PC-9 (cell line): ENCODE measurements at regions of chr7 and their contacts with region 1.

Region 1: DNA sequence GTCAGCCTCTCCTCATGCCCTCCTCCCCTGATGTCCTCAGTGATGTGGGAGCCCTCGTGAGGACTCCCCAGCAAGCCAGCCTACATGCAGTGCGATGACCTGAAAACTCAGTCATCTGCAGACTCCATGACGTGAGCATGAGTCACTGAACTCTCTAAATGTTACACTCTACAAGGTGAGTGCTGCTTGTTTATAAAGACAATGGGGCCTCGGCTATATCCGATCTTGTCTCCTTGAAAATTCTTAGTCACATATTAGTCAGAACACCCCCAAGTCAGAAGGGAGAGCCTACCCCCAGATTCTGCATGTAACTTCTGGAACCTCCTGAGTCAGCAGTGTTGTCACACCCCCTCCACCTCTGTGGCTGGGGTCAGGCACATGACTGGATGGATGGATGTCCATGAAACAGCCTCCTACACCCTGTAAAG is 673.8 kb downstream of the INHBA start:
- DNase-seq: peak; percentile 74 to 84
- H3K4me3 ChIP-seq: no peak overlapping the region
- H3K27ac ChIP-seq: peak overlapping the region; percentile 39
- H3K4me1 ChIP-seq: peaks cover 22% of the 10 kb centered on the region
- H3K27me3 ChIP-seq: no peaks in the 10 kb centered on the region
- CTCF ChIP-seq: no peak

Region 2: GRCh38 chr7:40733578-40733977 is 295.5 kb before region 1 on chr7:
- CTCF ChIA-PET with region 1: no interaction called
- POLR2A ChIA-PET with region 1: no interaction called
- intact Hi-C with region 1: loop called (anchors 1 kb)
- DNase-seq: peak; percentile 40 to 92
- H3K4me3 ChIP-seq: no peak overlapping the region
- H3K27ac ChIP-seq: peak overlapping the region; percentile 36
- H3K4me1 ChIP-seq: peaks cover 26% of the 10 kb centered on the region
- H3K27me3 ChIP-seq: no peaks in the 10 kb centered on the region
- CTCF ChIP-seq: no peak

Region 3: DNA sequence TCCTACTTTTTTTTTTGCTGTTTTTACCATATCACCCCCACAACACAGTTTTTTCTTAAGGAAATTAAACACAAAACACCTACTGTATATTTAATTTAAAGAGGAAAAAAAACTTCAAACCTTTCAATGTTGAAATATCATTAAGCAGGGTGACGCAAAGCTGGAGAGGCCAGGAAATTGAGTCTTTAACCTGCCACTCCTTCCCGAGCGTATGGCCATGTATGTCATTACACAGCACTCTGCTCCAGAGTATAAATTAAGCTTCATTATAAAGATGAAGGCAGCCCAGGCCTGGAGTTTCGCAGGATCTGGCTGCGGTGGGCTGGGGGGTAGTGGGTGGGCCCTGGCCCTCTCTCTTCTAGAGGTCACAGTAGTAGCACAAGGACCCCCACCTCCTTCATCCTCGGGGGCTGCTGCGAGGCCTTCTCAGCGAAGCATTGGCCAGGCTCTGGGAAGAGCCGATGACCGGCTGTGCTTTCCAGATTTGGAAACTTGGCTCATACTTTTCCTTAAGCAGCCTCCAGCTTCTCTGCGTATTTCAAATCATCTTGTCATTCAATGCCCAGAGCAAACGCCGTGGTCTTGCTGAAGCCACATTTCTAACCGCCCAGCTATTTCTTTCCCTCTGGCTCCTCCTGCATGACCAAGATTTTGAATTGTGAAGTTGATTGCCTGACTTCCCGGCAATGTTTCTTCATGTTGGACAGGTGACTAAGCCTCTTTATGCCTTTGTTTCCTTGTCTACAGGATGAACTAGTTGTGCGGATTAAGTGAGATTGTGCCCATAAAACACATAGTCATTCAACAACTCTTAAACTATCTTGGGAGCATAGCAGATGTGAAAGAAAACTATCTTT is 129.2 kb before region 1 on chr7:
- CTCF ChIA-PET with region 1: no interaction called
- POLR2A ChIA-PET with region 1: no interaction called
- intact Hi-C with region 1: loop called (anchors 1 kb)
- DNase-seq: peak; percentile 48 to 89
- H3K4me3 ChIP-seq: peak overlapping the region; percentile 51
- H3K27ac ChIP-seq: peak overlapping the region; percentile 94
- H3K4me1 ChIP-seq: peaks cover 25% of the 10 kb centered on the region
- H3K27me3 ChIP-seq: no peaks in the 10 kb centered on the region
- CTCF ChIP-seq: no peak

Region 4: GRCh38 chr7:41003031-41003925 is 25.8 kb before region 1 on chr7:
- CTCF ChIA-PET with region 1: interaction called, 7 read pairs
- POLR2A ChIA-PET with region 1: interaction called, 6 read pairs
- intact Hi-C with region 1: loop called (anchors 1 kb)
- DNase-seq: peak; percentile 59 to 90
- H3K4me3 ChIP-seq: no peak overlapping the region
- H3K27ac ChIP-seq: peak overlapping the region; percentile 10
- H3K4me1 ChIP-seq: peaks cover 54% of the 10 kb centered on the region
- H3K27me3 ChIP-seq: no peaks in the 10 kb centered on the region
- CTCF ChIP-seq: peak; percentile 95

Region 5: DNA sequence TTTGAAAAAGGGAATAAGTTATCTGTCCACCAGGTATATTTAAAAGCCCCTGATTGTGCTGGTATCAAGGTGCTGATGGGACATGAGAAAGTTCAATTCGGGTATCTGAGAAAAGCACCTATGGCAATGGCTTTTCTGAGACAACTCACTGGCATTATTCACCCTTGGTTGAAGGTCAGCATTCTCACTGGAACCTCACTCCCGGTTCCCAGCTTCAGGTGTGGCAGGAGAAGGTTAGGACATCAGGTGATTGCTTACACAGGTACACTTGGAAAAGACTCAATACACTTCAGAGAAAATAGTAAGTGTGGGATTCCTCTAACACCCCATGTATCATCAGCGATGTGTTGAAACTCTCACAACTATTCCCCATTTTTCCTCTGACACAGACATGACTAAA is 30.7 kb after region 1 on chr7:
- CTCF ChIA-PET with region 1: no interaction called
- POLR2A ChIA-PET with region 1: no interaction called
- intact Hi-C with region 1: no loop called
- DNase-seq: peak in 1 of 2 experiments; percentile 52
- H3K4me3 ChIP-seq: no peak overlapping the region
- H3K27ac ChIP-seq: peak overlapping the region; percentile 71
- H3K4me1 ChIP-seq: peaks cover 17% of the 10 kb centered on the region
- H3K27me3 ChIP-seq: no peaks in the 10 kb centered on the region
- CTCF ChIP-seq: no peak